IMR-90 (cell line): ENCODE measurements at regions of chr4 and their contacts with region 1.

Region 1: DNA sequence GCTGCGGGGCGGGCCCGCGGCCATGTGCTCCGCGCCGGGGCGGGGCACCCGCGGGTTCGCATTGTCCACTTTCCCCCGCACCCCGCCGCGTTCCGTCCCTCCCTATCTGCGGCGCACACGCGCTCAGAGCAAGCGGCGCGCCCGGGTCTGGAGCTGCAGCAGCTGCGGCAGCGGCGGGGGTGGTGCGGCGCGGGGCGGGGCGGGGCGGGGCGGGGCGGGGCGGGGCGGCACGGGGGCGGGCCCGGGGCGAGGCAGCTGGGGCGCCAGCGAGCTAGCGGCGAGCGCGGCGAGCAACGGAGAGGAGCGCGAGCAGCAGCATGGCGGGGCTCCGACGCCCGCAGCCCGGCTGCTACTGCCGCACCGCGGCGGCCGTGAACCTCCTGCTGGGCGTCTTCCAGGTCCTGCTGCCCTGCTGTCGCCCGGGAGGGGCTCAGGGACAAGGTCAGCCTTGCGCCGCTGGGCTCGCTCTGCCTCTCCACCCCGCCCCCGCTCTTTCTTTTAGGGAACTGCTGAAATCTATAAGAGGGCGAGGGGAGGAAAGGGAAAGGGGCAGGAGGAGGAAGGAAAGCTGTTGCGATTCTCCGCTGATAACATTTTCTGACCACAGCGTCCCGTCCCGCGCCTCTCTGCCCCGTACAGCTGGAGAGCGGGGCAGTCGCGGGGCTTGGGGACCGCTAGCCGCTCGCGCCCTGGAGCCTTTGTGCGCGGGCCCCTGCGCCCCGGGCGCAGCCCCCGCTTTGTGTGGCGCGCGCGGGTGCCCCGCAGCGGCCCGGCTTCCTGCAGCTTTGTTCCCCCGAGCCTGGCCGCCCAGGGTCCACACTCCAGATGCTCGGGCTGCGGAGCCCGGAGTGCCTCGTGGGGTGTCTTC is at the start of gene TMEM131L:
- DNase-seq: peak; percentile 52
- ATAC-seq: peak; percentile 90
- H3K4me3 ChIP-seq: peak within 1 kb of the TSS; percentile 96
- H3K27ac ChIP-seq: peak within 1 kb of the TSS; percentile 65
- H3K4me1 ChIP-seq: peaks cover 2% of the 10 kb centered on the region; the same call in 1 of the 2 replicates
- H3K27me3 ChIP-seq: no peaks in the 10 kb centered on the region
- CTCF ChIP-seq: no peak
- POLR2A ChIP-seq: 0 out of 2 replicates have a peak, but pooled peaks have one; percentile 33
- RAD21 ChIP-seq: no peak; the same call in 1 of the 2 replicates
- total RNA-seq, gene TMEM131L: 16.1 and 23.8 TPM in 2 replicates

Region 2: DNA sequence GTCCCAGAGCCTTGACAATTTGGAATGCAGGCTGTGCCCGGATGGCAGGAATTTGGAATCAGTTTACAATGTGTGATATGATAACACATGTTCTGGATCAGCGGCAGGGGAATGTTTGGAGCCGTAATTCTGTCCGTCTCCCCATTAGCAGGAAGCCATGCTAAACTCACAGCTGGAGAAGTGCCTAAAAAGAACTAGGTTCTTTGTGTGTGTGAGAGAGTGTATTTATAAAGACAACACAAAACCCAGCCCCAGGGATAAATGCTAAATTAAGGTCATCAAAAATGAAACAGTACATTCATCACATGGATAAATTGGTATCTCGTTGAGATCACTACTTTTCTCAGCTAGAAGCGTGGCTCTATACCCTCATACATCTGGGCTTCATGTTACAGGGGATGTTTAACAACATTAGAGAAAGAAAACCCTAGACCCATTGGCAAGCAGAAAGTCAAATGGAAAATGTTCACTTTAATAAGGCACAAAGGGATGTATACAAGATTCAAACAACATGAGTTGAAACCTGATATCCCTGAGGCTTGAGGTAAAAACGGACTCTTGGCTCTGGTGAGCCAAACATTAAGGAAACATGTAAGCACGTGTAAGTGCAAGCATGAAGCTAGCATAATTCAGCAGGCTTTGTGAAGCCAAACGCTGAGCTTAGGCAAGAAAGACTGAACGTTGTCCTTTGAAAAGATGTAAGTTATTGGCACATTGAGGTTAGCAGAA is 18.1 kb before region 1 on chr4:
- CTCF ChIA-PET with region 1: interaction called, 5 read pairs
- POLR2A ChIA-PET with region 1: interaction called, 4 read pairs
- dilution Hi-C with region 1: no loop called
- in situ Hi-C with region 1: no loop called
- intact Hi-C with region 1: loop called (anchors 2 kb)
- DNase-seq: peak; percentile 81
- ATAC-seq: peak; percentile 59
- H3K4me3 ChIP-seq: peak overlapping the region; percentile 9; the same call in 1 of the 2 replicates
- H3K27ac ChIP-seq: peak overlapping the region; percentile 7; the same call in 1 of the 2 replicates
- H3K4me1 ChIP-seq: peaks cover 5% of the 10 kb centered on the region
- H3K27me3 ChIP-seq: no peaks in the 10 kb centered on the region
- CTCF ChIP-seq: no peak
- POLR2A ChIP-seq: no peak
- RAD21 ChIP-seq: no peak

Region 3: DNA sequence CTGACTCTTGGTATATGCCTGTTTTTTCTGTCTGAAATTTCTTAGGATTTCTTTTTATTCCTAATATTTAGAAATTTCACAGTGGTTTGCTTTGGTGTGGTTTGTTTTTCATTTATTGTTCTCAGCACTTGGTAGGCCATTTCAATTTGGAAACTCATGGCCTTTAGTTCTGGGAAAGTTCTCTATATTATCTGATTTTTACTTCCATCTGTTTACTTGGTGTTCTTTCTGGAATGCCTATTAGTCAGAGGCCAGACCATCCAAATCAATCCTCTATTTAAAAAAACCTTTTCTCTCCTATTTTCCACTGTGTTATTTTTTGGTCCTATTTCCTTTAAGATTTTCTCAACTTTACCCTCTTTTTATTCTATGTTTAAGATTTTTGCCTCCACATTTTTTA is 510.6 kb after region 1 on chr4:
- CTCF ChIA-PET with region 1: no interaction called
- POLR2A ChIA-PET with region 1: no interaction called
- dilution Hi-C with region 1: no loop called
- in situ Hi-C with region 1: no loop called
- intact Hi-C with region 1: no loop called
- DNase-seq: no peak
- ATAC-seq: no peak
- H3K4me3 ChIP-seq: no peak overlapping the region
- H3K27ac ChIP-seq: no peak overlapping the region
- H3K4me1 ChIP-seq: no peaks in the 10 kb centered on the region
- H3K27me3 ChIP-seq: no peaks in the 10 kb centered on the region
- CTCF ChIP-seq: no peak
- POLR2A ChIP-seq: no peak
- RAD21 ChIP-seq: no peak